Gastrocnemius medialis (tissue), 4 donors: ENCODE measurements at regions of chr1 and their contacts with region 1.

Region 1: GRCh38 chr1:1763657-1764616 is 14.3 kb downstream of the NADK start:
- DNase-seq: peak in 1 of 2 donors; percentile 75
- ATAC-seq: peak; percentile 39 to 83
- H3K4me3 ChIP-seq: no peak overlapping the region
- H3K27ac ChIP-seq: peak overlapping the region in 1 of 4 donors; percentile 25
- H3K4me1 ChIP-seq: peaks cover 0 to 6% of the 10 kb centered on the region in 2 donors
- H3K27me3 ChIP-seq: no peaks in the 10 kb centered on the region
- CTCF ChIP-seq: no peak
- POLR2A ChIP-seq: no peak

Region 2: GRCh38 chr1:1900883-1901640 is 137.1 kb after region 1 on chr1:
- in situ Hi-C with region 1: loop called in 3 of 4 experiments (anchors 5 to 25 kb)
- intact Hi-C with region 1: no loop called
- DNase-seq: no peak
- ATAC-seq: no peak
- H3K4me3 ChIP-seq: no peak overlapping the region
- H3K27ac ChIP-seq: no peak overlapping the region
- H3K4me1 ChIP-seq: peaks cover 0 to 3% of the 10 kb centered on the region in 2 donors
- H3K27me3 ChIP-seq: no peaks in the 10 kb centered on the region
- CTCF ChIP-seq: no peak
- POLR2A ChIP-seq: no peak